T-cell (primary cell): ENCODE measurements at regions of chr19 and their contacts with region 1.

Region 1: DNA sequence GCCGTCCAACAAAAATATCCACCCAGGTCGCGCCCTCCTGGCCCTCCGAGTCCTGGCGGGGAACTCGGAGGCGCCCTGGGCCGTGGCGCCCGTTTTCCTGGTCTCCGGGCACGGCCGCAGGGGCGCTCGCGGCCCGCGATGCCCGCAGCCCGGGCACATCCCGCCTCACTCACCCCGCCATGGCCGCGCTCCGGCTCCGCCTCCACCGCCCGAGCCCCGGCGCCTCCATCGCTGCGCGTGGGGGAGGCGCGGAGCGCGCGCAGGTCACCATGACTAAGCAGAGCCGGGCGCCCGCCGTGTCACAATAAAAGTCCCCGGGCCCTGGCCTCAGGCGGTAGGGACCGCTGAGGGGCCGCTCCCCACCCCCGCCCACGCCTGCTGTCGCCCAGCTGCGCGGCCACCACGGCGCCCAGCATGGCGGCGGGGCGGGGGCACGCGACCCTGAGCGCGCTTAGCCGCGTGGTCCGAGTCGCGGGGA is 593 bp downstream of the KEAP1 start:
- DNase-seq: peak; percentile 69 to 90 (median 81)
- ATAC-seq: peak; percentile 92 to 95 (median 94)
- H3K4me3 ChIP-seq: peak overlapping the region; percentile 94
- H3K4me3 Mint-ChIP-seq: peak overlapping the region; percentile 83 to 91 (median 85)
- H3K27ac ChIP-seq: peak overlapping the region; percentile 85
- H3K27ac Mint-ChIP-seq: peak overlapping the region; percentile 80 to 86
- H3K4me1 ChIP-seq: peaks cover 2 to 53% of the 10 kb centered on the region in 2 experiments
- H3K4me1 Mint-ChIP-seq: peaks cover 33 to 39% (median 37%) of the 10 kb centered on the region in 3 donors
- H3K27me3 ChIP-seq: no peaks in the 10 kb centered on the region
- H3K27me3 Mint-ChIP-seq: no peaks in the 10 kb centered on the region

Region 2: GRCh38 chr19:10565567-10566407 is 63.2 kb after region 1 on chr19 and contains the start of gene KRI1:
- CTCF ChIA-PET with region 1: interaction called in 1 of 2 experiments, 3 read pairs
- POLR2A ChIA-PET with region 1: interaction called in 1 of 2 experiments, 11 read pairs
- DNase-seq: peak; percentile 97 to 99 (median 98)
- ATAC-seq: peak; percentile 57 to 64 (median 61)
- H3K4me3 ChIP-seq: peak within 1 kb of the TSS; percentile 96 to 100
- H3K4me3 Mint-ChIP-seq: peak within 1 kb of the TSS; percentile 93 to 97 (median 95)
- H3K27ac ChIP-seq: peak within 1 kb of the TSS; percentile 83
- H3K27ac Mint-ChIP-seq: peak within 1 kb of the TSS; percentile 97 to 98
- H3K4me1 ChIP-seq: peaks cover 22 to 60% of the 10 kb centered on the region in 2 experiments
- H3K4me1 Mint-ChIP-seq: peaks cover 43 to 54% (median 46%) of the 10 kb centered on the region in 3 donors
- H3K27me3 ChIP-seq: no peaks in the 10 kb centered on the region
- H3K27me3 Mint-ChIP-seq: no peaks in the 10 kb centered on the region
- total RNA-seq, gene KRI1: 50.9 to 94.8 (median 79.1) TPM